ENCODE measurements at regions of chr3 and their contacts with region 1.

Region 1: DNA sequence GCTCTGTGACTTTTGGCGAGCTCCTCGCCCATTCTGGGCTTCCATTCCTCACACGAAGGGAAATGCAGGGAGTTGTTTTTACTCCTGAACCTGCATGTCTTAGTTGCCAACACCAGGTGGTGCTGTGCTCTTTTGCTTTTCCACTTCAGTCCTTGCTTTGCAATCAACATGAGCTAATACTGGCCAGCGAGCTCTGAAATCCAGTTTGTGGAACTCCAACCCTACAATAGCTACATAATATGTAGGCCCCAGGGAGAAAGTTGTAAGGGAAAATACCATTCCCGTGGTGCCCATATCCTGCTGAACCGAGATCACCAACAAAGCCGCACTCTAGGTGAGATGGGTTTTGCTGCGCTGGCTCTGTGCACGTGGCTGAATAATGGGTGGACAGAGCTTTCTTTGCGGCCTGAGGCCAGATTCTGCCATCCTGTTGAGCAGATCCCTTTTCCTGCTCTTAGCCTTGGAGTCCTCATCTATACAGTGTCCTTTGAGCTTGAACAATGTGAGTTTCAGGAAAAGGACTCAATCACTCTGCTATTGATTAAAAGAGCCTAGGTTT is 25.0 kb downstream of the LSM3 start:
- DNase-seq: peak; percentile 75
- H3K4me3 Mint-ChIP-seq: no peak overlapping the region
- H3K27ac Mint-ChIP-seq: no peak overlapping the region
- H3K4me1 Mint-ChIP-seq: peaks cover 24% of the 10 kb centered on the region
- H3K27me3 Mint-ChIP-seq: no peaks in the 10 kb centered on the region
- CTCF ChIP-seq: peak; percentile 68

Region 2: DNA sequence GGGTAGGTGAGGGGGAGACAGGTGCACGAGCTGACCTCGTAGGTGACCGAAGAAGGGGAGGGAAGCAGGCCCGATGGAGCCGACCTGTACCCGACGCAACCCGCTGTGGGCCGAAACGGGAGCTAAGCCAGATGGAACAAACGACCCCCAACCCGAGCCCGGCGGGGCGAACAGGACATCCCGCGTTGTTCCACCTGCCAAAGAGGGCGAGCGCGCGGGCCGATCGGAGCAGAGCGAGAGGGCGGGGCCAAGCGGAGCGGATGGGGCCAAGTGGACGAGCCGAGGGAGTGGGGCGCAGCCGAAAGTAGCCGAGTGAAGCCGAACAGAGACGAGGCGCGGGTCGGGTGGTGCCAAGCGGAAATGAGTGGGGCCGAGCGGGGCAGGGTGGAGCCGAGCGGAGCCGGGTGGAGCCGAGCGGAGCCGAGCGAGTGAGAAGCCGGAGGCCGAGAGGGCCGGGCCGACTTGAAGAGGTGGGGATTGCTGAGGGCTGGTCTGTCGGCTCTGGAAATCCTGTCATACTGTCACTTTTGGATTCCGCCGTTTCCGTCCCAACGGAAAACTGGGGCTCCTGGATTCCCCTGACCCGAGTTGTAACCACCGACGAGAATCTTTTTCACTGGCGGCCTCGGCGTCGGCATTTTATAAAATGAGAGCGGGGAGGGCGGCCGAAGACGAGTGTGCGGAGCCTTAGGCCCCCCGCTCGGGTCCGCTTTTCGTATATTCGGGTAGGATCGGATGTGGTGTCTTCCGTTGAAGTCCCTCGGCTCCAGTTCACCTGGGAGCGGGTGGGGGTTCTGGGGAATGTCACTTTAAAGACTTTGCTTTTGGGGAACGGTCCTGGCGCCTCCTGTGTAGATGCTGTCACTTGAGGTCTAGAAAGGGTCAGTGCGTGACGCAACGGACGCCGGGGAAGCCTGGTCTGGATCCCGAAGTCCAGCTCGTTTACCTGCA is 308.2 kb before region 1 on chr3:
- CTCF ChIA-PET with region 1: interaction called, 16 read pairs
- POLR2A ChIA-PET with region 1: interaction called, 6 read pairs
- intact Hi-C with region 1: loop called (anchors 5 kb)
- DNase-seq: peak; percentile 95
- H3K4me3 Mint-ChIP-seq: peak overlapping the region; percentile 81
- H3K27ac Mint-ChIP-seq: peak overlapping the region; percentile 88
- H3K4me1 Mint-ChIP-seq: peaks cover 4% of the 10 kb centered on the region
- H3K27me3 Mint-ChIP-seq: no peaks in the 10 kb centered on the region
- CTCF ChIP-seq: no peak

Region 3: DNA sequence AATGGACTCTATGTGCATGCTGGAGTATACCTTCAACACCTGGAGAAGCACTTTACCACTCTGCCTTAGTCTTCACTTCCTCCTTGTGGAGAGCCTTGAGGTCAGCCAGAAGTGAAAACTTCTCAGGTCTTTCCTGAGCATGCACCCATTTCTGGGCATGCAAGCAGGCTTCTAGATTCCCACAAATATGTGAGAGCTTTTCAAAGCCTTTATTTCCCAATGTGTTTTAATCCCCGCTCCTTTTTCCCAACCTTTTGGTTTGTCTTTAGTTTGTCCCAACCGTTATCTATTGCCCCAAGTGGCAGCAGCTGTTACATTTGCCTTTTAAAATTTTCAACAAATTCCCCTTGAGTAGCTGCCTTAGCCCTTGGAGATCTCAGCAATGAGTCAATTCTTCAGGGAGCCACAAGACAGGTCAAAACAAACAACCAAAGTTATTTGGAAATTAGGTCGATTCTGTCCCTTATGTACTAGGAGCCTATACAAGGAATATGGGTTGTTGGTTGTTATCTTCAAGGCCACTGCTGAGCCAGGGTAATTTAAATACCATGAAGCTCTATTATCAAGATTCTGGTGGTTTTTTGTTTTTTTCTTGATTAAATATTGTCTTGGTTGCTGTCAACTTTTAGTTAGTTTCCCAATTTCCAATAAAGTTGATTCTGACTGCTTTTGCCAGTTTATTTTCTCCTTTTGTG is 19.4 kb after region 1 on chr3:
- CTCF ChIA-PET with region 1: interaction called, 16 read pairs
- POLR2A ChIA-PET with region 1: interaction called, 5 read pairs
- intact Hi-C with region 1: no loop called
- DNase-seq: no peak
- H3K4me3 Mint-ChIP-seq: no peak overlapping the region
- H3K27ac Mint-ChIP-seq: no peak overlapping the region
- H3K4me1 Mint-ChIP-seq: no peaks in the 10 kb centered on the region
- H3K27me3 Mint-ChIP-seq: no peaks in the 10 kb centered on the region
- CTCF ChIP-seq: no peak

Region 4: DNA sequence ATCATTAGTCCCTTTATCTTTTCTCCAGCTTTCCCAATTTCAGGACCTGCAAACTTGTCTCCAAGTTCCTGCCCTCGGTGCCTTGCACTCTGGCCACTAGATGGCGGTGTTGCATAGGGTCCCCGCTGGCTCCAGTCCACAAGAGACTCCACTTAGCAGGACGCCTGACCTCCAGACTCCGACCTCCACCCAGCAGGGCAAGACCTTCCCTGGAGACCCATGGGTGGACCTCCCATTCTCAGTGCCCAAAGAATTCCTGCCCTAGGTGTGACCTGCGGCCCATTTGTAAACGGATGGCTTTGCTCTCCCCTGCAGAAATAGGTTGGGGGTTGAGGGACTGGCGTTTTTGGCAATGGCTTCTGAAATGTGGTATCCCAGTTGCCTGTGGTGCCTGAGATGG is 57.6 kb after region 1 on chr3:
- CTCF ChIA-PET with region 1: interaction called, 103 read pairs
- POLR2A ChIA-PET with region 1: interaction called, 4 read pairs
- intact Hi-C with region 1: loop called (anchors 1 kb)
- DNase-seq: peak; percentile 80
- H3K4me3 Mint-ChIP-seq: no peak overlapping the region
- H3K27ac Mint-ChIP-seq: no peak overlapping the region
- H3K4me1 Mint-ChIP-seq: no peaks in the 10 kb centered on the region
- H3K27me3 Mint-ChIP-seq: peaks cover 29% of the 10 kb centered on the region
- CTCF ChIP-seq: peak; percentile 97

Region 5: DNA sequence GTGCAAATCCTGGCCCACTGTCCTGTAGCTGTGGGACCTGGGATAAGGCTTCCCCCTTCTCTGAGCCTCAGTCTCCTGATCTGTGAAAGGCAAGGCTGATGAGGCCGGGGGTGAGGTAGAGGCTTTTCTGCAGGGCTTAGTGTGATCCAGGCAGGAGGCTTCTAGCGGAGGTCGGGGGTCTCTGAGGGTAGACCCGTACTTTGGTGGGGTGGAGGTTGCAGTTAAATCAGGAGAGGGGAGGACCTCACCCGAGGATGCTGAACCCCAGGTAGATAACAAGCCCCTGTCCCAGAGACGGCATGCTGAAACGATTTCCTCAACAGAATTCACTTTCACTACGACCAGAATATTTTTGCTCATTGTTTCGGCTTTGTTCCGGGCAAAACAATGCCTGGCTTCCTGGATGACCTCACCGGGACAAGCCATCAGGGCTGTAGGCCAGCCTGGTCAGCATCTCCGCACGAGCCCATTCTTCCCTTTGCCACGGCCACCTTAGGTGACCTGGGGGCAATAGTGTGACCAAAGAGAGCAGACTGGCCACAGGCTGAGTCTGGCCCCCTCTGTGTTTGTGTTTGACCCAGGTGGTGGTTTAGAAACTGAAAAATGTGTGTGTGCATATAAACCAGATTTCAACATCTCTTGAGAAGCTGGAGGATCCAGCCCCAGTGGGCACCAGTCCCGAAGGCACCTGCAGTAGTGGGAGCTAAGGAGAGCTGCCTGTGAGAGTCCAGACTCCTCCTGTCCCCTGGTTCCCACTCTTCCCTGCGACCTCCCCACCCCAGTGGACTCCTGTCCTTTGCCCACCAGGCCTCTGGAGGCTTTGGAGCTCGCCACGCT is 231.8 kb after region 1 on chr3:
- CTCF ChIA-PET with region 1: interaction called, 10 read pairs
- POLR2A ChIA-PET with region 1: no interaction called
- intact Hi-C with region 1: no loop called
- DNase-seq: no peak
- H3K4me3 Mint-ChIP-seq: no peak overlapping the region
- H3K27ac Mint-ChIP-seq: no peak overlapping the region
- H3K4me1 Mint-ChIP-seq: peaks cover 53% of the 10 kb centered on the region
- H3K27me3 Mint-ChIP-seq: no peaks in the 10 kb centered on the region
- CTCF ChIP-seq: no peak

Region 6: GRCh38 chr3:14467814-14468620 is 264.4 kb after region 1 on chr3:
- CTCF ChIA-PET with region 1: interaction called, 138 read pairs
- POLR2A ChIA-PET with region 1: interaction called, 16 read pairs
- intact Hi-C with region 1: loop called (anchors 1 kb)
- DNase-seq: peak; percentile 34
- H3K4me3 Mint-ChIP-seq: no peak overlapping the region
- H3K27ac Mint-ChIP-seq: no peak overlapping the region
- H3K4me1 Mint-ChIP-seq: peaks cover 9% of the 10 kb centered on the region
- H3K27me3 Mint-ChIP-seq: no peaks in the 10 kb centered on the region
- CTCF ChIP-seq: peak; percentile 92

Region 7: GRCh38 chr3:14921078-14921616 is 717.5 kb after region 1 on chr3:
- CTCF ChIA-PET with region 1: interaction called, 23 read pairs
- POLR2A ChIA-PET with region 1: interaction called, 3 read pairs
- intact Hi-C with region 1: loop called (anchors 5 kb)
- DNase-seq: peak; percentile 79
- H3K4me3 Mint-ChIP-seq: no peak overlapping the region
- H3K27ac Mint-ChIP-seq: no peak overlapping the region
- H3K4me1 Mint-ChIP-seq: no peaks in the 10 kb centered on the region
- H3K27me3 Mint-ChIP-seq: peaks cover 26% of the 10 kb centered on the region
- CTCF ChIP-seq: peak; percentile 99